Activated CD4-positive, alpha-beta memory T cell treated with anti-CD3 and anti-CD28 coated beads for 36 hours (primary cell): ENCODE measurements at regions of chr10 and their contacts with region 1.

Region 1: DNA sequence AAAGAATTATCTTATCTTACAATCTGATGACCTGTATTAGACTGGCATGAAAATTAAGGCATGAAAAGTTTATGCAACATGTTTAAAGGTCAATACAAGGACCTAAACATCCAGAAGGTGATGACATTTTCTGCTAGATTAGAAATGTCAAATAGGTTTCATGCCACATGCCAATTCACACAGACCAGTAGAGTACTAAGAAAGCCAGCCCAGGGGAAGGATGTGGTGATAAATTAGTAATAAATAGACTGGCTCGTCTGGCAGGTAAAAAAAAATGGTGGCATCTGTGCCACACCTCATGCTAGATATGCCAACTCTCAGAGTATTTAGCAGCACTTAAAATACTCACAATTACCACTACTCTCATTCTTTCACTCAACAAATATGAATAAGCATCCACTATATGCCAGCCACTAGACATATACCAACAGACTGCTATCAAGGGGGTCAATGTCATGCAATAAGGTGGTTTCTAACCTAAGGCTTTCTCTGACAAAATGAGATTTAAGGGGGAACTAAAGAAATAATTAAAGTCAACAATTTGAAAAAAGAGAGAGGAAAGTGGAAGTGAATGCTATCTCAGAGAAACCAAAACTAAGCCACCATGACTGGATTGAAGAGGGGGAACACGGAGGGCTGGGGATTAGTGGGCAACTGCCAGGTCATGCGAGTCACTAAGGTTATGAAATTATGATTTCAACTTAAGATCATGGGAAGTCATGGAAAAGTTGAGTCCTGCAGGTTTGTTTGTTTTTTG is 83.5 kb downstream of the SGMS1 start:
- DNase-seq: peak; percentile 70
- H3K4me3 Mint-ChIP-seq: peak overlapping the region; percentile 36
- H3K27ac Mint-ChIP-seq: peak overlapping the region; percentile 75
- H3K4me1 Mint-ChIP-seq: peaks cover 86% of the 10 kb centered on the region
- H3K27me3 Mint-ChIP-seq: no peaks in the 10 kb centered on the region

Region 2: GRCh38 chr10:50577681-50578350 is 37.6 kb after region 1 on chr10:
- CTCF ChIA-PET with region 1: no interaction called
- POLR2A ChIA-PET with region 1: no interaction called
- intact Hi-C with region 1: loop called (anchors 1 kb)
- DNase-seq: peak; percentile 21
- H3K4me3 Mint-ChIP-seq: no peak overlapping the region
- H3K27ac Mint-ChIP-seq: no peak overlapping the region
- H3K4me1 Mint-ChIP-seq: peaks cover 57% of the 10 kb centered on the region
- H3K27me3 Mint-ChIP-seq: no peaks in the 10 kb centered on the region